HepG2 (cell line): ENCODE measurements at regions of chr6 and their contacts with region 1.

Region 1: DNA sequence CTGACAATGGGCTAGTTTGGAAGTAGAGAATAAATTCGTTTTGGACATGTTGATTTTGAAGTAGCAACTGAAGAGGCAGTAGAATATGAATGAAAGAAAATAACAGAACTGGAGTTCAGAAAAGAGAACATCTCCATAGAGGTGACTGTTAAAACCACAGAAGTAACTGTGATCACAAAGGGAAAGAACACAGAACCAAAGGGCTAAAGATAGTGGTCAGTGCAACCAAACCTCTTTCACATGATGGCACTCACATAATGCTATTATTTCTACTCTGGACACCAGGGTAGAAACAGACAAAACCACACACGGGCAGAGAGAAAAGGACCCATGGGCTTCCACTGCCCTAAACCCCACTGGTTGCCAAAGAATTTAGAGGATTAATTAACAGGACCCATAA is 58.5 kb downstream of the CDK19 start:
- DNase-seq: no peak
- ATAC-seq: no peak
- H3K4me3 ChIP-seq: no peak overlapping the region
- H3K27ac ChIP-seq: peak overlapping the region; percentile 5
- H3K4me1 ChIP-seq: peaks cover 53% of the 10 kb centered on the region
- H3K27me3 ChIP-seq: no peaks in the 10 kb centered on the region
- CTCF ChIP-seq: no peak
- EP300 ChIP-seq: no peak
- POLR2A ChIP-seq: no peak
- RAD21 ChIP-seq: no peak

Region 2: DNA sequence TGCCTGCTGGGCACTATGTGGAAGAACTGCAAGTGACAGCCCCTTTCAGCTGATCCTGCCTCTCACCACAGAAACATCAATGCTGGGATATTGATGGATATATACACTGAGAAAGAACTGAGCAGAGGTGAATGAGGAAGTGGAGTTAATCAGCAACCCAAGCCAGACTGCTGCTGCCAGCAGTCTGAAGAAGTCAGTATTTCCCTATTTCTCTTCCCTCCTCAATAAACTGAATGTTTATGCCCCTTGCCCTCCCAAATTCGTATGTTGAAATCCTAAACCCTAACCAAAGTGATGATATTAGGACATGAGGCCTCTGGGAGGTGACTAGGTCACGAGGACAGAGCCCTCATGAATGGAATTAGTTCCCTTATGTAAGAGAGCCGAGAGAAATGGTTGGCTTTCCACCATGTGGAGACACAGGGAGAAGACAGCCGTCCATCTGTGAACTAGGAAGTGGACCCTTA is 17.9 kb before region 1 on chr6:
- CTCF ChIA-PET with region 1: no interaction called
- POLR2A ChIA-PET with region 1: interaction called, 3 read pairs
- in situ Hi-C with region 1: no loop called
- intact Hi-C with region 1: loop called (anchors 2 kb)
- DNase-seq: peak; percentile 86
- ATAC-seq: peak; percentile 99
- H3K4me3 ChIP-seq: peak overlapping the region in 2 of 3 experiments; percentile 23 to 24; a peak in 4 of 6 replicates
- H3K27ac ChIP-seq: peak overlapping the region; percentile 71
- H3K4me1 ChIP-seq: peaks cover 39% of the 10 kb centered on the region
- H3K27me3 ChIP-seq: no peaks in the 10 kb centered on the region
- CTCF ChIP-seq: peak; percentile 29
- EP300 ChIP-seq: peak in 1 of 2 experiments; percentile 56; a peak in 2 of 4 replicates
- POLR2A ChIP-seq: peak in 1 of 2 experiments; percentile 38; a peak in 1 of 4 replicates
- RAD21 ChIP-seq: no peak

Region 3: GRCh38 chr6:110746680-110747079 is 10.1 kb before region 1 on chr6:
- CTCF ChIA-PET with region 1: no interaction called
- POLR2A ChIA-PET with region 1: interaction called, 12 read pairs
- in situ Hi-C with region 1: no loop called
- intact Hi-C with region 1: no loop called
- DNase-seq: peak; percentile 93
- ATAC-seq: peak; percentile 99
- H3K4me3 ChIP-seq: peak overlapping the region; percentile 47 to 63 (median 48); a peak in 5 of 6 replicates
- H3K27ac ChIP-seq: peak overlapping the region; percentile 81
- H3K4me1 ChIP-seq: peaks cover 57% of the 10 kb centered on the region
- H3K27me3 ChIP-seq: no peaks in the 10 kb centered on the region
- CTCF ChIP-seq: no peak
- EP300 ChIP-seq: peak in 1 of 2 experiments; percentile 79; a peak in 2 of 4 replicates
- POLR2A ChIP-seq: no peak; a peak in 2 of 4 replicates
- RAD21 ChIP-seq: no peak